ENCODE measurements at regions of chr14 and their contacts with region 1.

Region 1: DNA sequence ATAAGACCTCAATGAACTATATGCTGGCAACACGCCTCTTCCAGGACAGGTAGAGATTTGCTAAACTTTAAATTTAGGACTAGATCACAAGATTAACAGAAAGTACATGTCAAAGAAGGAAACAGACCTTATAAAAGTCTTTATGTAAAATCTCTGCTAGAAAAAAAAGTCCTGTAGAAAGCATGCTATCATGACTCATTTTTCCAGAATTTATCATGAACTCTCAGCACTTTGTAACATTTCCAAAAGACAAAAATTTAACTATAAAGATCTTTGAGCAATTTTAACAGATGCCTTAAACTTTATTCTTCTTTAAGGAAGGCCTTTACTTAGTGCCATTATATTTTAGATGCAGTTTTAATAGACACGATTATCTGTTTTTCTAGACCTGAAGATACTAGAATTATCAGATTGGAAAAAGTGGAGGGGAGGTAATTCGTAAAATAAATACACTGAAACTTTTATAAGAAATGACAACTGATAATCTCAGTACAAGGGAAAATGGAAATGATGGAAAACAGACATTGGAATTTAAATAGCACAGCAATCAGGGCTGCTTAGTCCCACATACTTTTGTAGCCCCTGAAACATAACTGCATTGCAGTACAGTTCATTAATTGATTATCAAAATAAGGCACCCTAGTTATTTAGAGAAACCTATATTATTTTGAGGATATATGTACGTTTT is 92.0 kb downstream of the TTLL5 start:
- DNase-seq: no peak
- H3K4me3 ChIP-seq: no peak overlapping the region
- H3K27ac ChIP-seq: no peak overlapping the region
- H3K4me1 ChIP-seq: no peaks in the 10 kb centered on the region
- H3K27me3 ChIP-seq: no peaks in the 10 kb centered on the region
- CTCF ChIP-seq: no peak
- EP300 ChIP-seq: no peak
- POLR2A ChIP-seq: no peak

Region 2: GRCh38 chr14:74793506-74794168 is 959.4 kb before region 1 on chr14:
- in situ Hi-C with region 1: no loop called
- intact Hi-C with region 1: loop called (anchors 5 kb)
- DNase-seq: no peak
- H3K4me3 ChIP-seq: no peak overlapping the region
- H3K27ac ChIP-seq: no peak overlapping the region
- H3K4me1 ChIP-seq: peaks cover 0 to 22% (median 3%) of the 10 kb centered on the region in 4 donors
- H3K27me3 ChIP-seq: no peaks in the 10 kb centered on the region
- CTCF ChIP-seq: peak in 1 of 5 experiments; percentile 18
- EP300 ChIP-seq: no peak
- POLR2A ChIP-seq: no peak

Region 3: GRCh38 chr14:75702616-75703261 is 50.3 kb before region 1 on chr14:
- in situ Hi-C with region 1: no loop called
- intact Hi-C with region 1: no loop called
- DNase-seq: no peak
- H3K4me3 ChIP-seq: no peak overlapping the region
- H3K27ac ChIP-seq: peak overlapping the region in 3 of 4 donors; percentile 13 to 38 (median 14)
- H3K4me1 ChIP-seq: peaks cover 0 to 6% (median 0%) of the 10 kb centered on the region in 4 donors
- H3K27me3 ChIP-seq: no peaks in the 10 kb centered on the region
- CTCF ChIP-seq: no peak
- EP300 ChIP-seq: no peak
- POLR2A ChIP-seq: no peak

Region 4: GRCh38 chr14:75822522-75823141 is 69.6 kb after region 1 on chr14:
- in situ Hi-C with region 1: no loop called
- intact Hi-C with region 1: no loop called
- DNase-seq: no peak
- H3K4me3 ChIP-seq: no peak overlapping the region
- H3K27ac ChIP-seq: peak overlapping the region; percentile 51 to 78 (median 54)
- H3K4me1 ChIP-seq: peaks cover 17 to 50% (median 30%) of the 10 kb centered on the region in 4 donors
- H3K27me3 ChIP-seq: no peaks in the 10 kb centered on the region
- CTCF ChIP-seq: no peak
- EP300 ChIP-seq: no peak
- POLR2A ChIP-seq: no peak

Region 5: DNA sequence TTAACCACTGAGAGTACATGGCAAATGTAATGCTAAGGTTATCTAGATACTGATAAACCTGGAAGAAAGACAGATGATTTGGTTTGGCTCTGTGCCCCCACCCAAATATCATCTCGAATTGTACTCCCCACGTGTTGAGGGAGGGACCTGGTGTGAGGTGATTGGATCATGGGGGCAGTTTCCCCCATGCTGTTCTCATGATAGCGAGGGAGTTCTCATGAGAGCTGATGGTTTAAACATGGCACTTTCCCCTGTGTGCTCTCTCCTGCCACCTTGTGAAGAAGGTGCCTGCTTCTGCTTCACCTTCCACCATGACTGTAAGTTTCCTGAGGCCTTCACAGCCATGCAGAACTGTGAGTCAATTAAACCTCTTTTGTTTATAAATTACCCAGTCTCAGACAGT is 1656.1 kb after region 1 on chr14:
- in situ Hi-C with region 1: no loop called
- intact Hi-C with region 1: loop called (anchors 10 kb)
- DNase-seq: peak; percentile 8
- H3K4me3 ChIP-seq: no peak overlapping the region
- H3K27ac ChIP-seq: no peak overlapping the region
- H3K4me1 ChIP-seq: no peaks in the 10 kb centered on the region
- H3K27me3 ChIP-seq: no peaks in the 10 kb centered on the region
- CTCF ChIP-seq: peak in 2 of 5 experiments; percentile 11 to 16
- EP300 ChIP-seq: no peak
- POLR2A ChIP-seq: no peak